Panc1 (cell line): ENCODE measurements at regions of chr20 and their contacts with region 1.

Region 1: GRCh38 chr20:49484180-49485140 is 2.0 kb upstream of the KCNB1 start:
- DNase-seq: no peak
- ATAC-seq: peak; percentile 99
- H3K4me3 ChIP-seq: peak overlapping the region; percentile 57 to 60
- H3K27ac ChIP-seq: peak overlapping the region; percentile 29; the same call in 1 of the 2 replicates
- H3K4me1 ChIP-seq: peaks cover 15% of the 10 kb centered on the region; the same call in 1 of the 2 replicates
- H3K27me3 ChIP-seq: peaks cover 3% of the 10 kb centered on the region; the same call in 1 of the 2 replicates
- CTCF ChIP-seq: peak; percentile 91

Region 2: GRCh38 chr20:49346682-49347081 is 137.8 kb before region 1 on chr20:
- CTCF ChIA-PET with region 1: interaction called, 22 read pairs
- POLR2A ChIA-PET with region 1: no interaction called
- in situ Hi-C with region 1: no loop called
- intact Hi-C with region 1: no loop called
- DNase-seq: no peak
- ATAC-seq: 0 out of 2 replicates have a peak, but pooled peaks have one; percentile 68
- H3K4me3 ChIP-seq: no peak overlapping the region
- H3K27ac ChIP-seq: peak overlapping the region; percentile 18; the same call in 1 of the 2 replicates
- H3K4me1 ChIP-seq: peaks cover 10% of the 10 kb centered on the region
- H3K27me3 ChIP-seq: no peaks in the 10 kb centered on the region
- CTCF ChIP-seq: no peak

Region 3: GRCh38 chr20:49384437-49385088 is 99.9 kb before region 1 on chr20:
- CTCF ChIA-PET with region 1: interaction called, 30 read pairs
- POLR2A ChIA-PET with region 1: no interaction called
- in situ Hi-C with region 1: no loop called
- intact Hi-C with region 1: loop called (anchors 5 kb)
- DNase-seq: peak; percentile 13
- ATAC-seq: no peak
- H3K4me3 ChIP-seq: no peak overlapping the region
- H3K27ac ChIP-seq: peak overlapping the region; percentile 94
- H3K4me1 ChIP-seq: peaks cover 45% of the 10 kb centered on the region
- H3K27me3 ChIP-seq: no peaks in the 10 kb centered on the region
- CTCF ChIP-seq: peak; percentile 93

Region 4: DNA sequence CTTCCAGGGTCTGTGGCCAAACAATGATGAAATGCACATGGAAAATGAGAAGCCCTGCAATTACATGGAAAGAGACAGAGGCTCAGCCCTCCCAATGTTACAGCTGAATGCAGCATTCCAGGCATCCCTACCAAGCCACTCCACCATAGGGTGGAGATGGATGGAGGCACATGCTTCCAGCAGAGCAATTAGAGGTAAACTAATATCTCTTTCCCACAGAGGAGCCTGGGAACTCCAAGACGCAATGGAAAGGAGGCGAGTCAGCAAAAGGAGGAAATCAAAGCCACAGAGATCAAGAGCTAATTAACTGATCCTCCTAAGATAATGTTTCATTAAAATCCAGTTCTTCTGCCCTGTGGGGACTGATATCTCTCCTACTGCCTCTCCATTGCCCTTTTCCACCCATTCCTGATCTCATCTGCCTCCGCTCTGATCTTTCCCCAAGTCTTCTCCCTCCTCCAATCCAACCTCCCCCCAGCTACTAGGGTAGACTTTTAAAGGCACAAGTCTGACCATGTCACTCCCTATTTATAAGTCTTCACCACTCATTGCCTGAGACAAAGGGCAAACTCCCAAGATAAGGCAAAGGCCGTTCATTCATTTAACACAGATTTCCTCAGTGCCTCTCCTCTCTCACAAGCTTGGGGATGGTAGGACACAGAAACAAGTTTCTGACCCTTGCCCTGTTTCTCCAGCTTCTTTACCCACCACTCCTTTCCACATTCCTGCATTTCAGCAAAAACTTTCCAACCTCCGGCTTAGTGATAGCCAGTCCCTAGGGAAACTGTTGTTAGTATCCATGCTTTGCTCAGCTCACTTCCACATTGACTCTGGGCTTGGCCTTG is 12.3 kb after region 1 on chr20:
- CTCF ChIA-PET with region 1: interaction called, 10 read pairs
- POLR2A ChIA-PET with region 1: interaction called, 3 read pairs
- in situ Hi-C with region 1: no loop called
- intact Hi-C with region 1: no loop called
- DNase-seq: no peak
- ATAC-seq: no peak
- H3K4me3 ChIP-seq: no peak overlapping the region
- H3K27ac ChIP-seq: no peak overlapping the region
- H3K4me1 ChIP-seq: no peaks in the 10 kb centered on the region
- H3K27me3 ChIP-seq: no peaks in the 10 kb centered on the region
- CTCF ChIP-seq: no peak

Region 5: DNA sequence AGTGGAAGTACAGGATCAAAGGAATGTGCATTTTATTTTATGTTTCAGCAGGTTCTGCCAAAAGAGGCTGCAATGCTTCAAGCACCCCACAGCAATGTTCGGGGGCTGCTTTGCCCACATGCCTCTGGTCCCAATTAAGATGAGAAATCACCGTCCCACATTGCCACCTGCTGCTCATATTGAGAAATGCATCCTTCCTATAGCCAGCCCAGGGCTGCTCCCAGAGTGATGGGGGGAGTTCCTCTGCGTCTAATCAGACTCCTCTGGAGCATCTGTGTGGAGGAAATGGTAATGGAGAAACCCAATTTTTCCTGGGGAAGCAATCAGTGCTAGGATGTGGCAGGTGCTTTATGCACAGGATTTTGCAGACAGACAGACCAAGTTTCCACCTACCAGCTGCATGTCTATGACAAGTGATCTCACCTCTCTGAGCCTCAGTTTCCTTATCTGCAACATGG is 49.8 kb after region 1 on chr20:
- CTCF ChIA-PET with region 1: interaction called, 11 read pairs
- POLR2A ChIA-PET with region 1: no interaction called
- in situ Hi-C with region 1: no loop called
- intact Hi-C with region 1: no loop called
- DNase-seq: peak; percentile 47
- ATAC-seq: peak; percentile 92
- H3K4me3 ChIP-seq: no peak overlapping the region
- H3K27ac ChIP-seq: no peak overlapping the region
- H3K4me1 ChIP-seq: peaks cover 8% of the 10 kb centered on the region; the same call in 1 of the 2 replicates
- H3K27me3 ChIP-seq: no peaks in the 10 kb centered on the region
- CTCF ChIP-seq: peak; percentile 87